Naive thymus-derived CD4-positive, alpha-beta T cell (primary cell): ENCODE measurements at regions of chr2 and their contacts with region 1.

Region 1: GRCh38 chr2:101252408-101253012 is at the start of gene CNOT11:
- DNase-seq: peak; percentile 97 to 99 (median 98)
- ATAC-seq: peak; percentile 89
- H3K4me3 ChIP-seq: peak within 1 kb of the TSS; percentile 91
- H3K4me3 Mint-ChIP-seq: peak within 1 kb of the TSS; percentile 91 to 98 (median 96)
- H3K27ac ChIP-seq: peak within 1 kb of the TSS; percentile 99
- H3K27ac Mint-ChIP-seq: peak within 1 kb of the TSS; percentile 92 to 98 (median 96)
- H3K4me1 ChIP-seq: peaks cover 28 to 39% of the 10 kb centered on the region in 2 donors
- H3K4me1 Mint-ChIP-seq: peaks cover 27 to 58% (median 51%) of the 10 kb centered on the region in 7 donors
- H3K27me3 ChIP-seq: no peaks in the 10 kb centered on the region
- H3K27me3 Mint-ChIP-seq: no peaks in the 10 kb centered on the region
- total RNA-seq, gene CNOT11: 49.0 to 65.7 (median 54.3) TPM

Region 2: DNA sequence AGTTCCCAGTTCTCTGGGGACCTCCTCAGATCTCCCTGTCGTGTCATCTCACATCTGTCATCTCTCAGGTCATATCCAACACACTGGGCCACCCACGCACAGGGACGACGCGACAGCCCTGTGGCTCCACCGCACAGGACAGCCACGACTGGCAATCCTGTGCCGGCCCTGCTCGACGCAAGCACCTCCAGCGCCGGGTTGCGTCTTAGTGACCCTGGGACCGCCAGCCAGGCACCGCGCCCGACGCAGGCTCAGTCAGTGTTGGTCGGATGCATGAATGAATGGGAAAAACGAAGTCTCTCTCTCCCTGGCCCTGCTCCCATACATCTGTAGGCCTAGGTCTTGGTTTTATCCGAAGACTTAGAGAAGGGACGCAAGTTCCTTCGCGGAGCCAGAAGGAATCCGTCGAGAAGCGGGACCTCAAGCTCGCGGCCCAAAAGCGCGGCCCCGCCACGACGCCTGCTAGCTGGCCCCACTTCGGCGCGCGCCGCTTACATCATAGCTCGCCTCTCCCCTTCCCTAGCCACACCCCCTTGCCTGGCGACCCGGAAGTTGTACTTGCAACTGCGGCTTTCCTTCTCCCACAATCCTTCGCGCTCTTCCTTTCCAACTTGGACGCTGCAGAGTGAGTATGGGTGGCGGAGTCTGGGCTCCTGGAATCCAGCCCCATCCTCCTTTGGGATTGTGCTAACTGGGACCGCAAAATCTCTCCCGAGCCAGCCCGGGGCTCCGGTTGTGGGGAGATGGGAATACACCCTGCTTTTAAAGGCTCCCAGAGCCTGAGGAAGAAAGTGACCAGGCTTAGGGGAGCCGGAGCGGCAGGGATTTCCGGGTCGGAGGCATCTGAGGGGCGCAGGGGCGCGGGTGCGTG is 250.6 kb before region 1 on chr2 and contains the start of gene RPL31:
- CTCF ChIA-PET with region 1: no interaction called
- POLR2A ChIA-PET with region 1: interaction called, 8 read pairs
- intact Hi-C with region 1: loop called (anchors 1 kb)
- DNase-seq: peak; percentile 86 to 97 (median 95)
- ATAC-seq: peak; percentile 99
- H3K4me3 ChIP-seq: peak within 1 kb of the TSS; percentile 93
- H3K4me3 Mint-ChIP-seq: peak within 1 kb of the TSS; percentile 91 to 99 (median 95)
- H3K27ac ChIP-seq: peak within 1 kb of the TSS; percentile 86
- H3K27ac Mint-ChIP-seq: peak within 1 kb of the TSS; percentile 88 to 99 (median 98)
- H3K4me1 ChIP-seq: peaks cover 16 to 18% of the 10 kb centered on the region in 2 donors
- H3K4me1 Mint-ChIP-seq: peaks cover 32 to 48% (median 44%) of the 10 kb centered on the region in 7 donors
- H3K27me3 ChIP-seq: no peaks in the 10 kb centered on the region
- H3K27me3 Mint-ChIP-seq: peaks cover 0 to 5% (median 0%) of the 10 kb centered on the region in 5 donors
- total RNA-seq, gene RPL31: 1,182 to 2,835 (median 2,548) TPM

Region 3: GRCh38 chr2:101223814-101224231 is 28.7 kb before region 1 on chr2:
- CTCF ChIA-PET with region 1: interaction called, 3 read pairs
- POLR2A ChIA-PET with region 1: no interaction called
- intact Hi-C with region 1: loop called in 1 of 2 experiments (anchors 2 kb)
- DNase-seq: peak in 8 of 9 donors; percentile 18 to 62 (median 40)
- ATAC-seq: peak; percentile 92
- H3K4me3 ChIP-seq: peak overlapping the region; percentile 26
- H3K4me3 Mint-ChIP-seq: peak overlapping the region; percentile 19 to 79 (median 60)
- H3K27ac ChIP-seq: no peak overlapping the region
- H3K27ac Mint-ChIP-seq: peak overlapping the region; percentile 54 to 89 (median 77)
- H3K4me1 ChIP-seq: peaks cover 12 to 13% of the 10 kb centered on the region in 2 donors
- H3K4me1 Mint-ChIP-seq: peaks cover 12 to 17% (median 16%) of the 10 kb centered on the region in 7 donors
- H3K27me3 ChIP-seq: no peaks in the 10 kb centered on the region
- H3K27me3 Mint-ChIP-seq: no peaks in the 10 kb centered on the region

Region 4: GRCh38 chr2:101308432-101309210 is 56.1 kb after region 1 on chr2 and contains the start of gene RNF149:
- CTCF ChIA-PET with region 1: interaction called, 3 read pairs
- POLR2A ChIA-PET with region 1: interaction called, 14 read pairs
- intact Hi-C with region 1: loop called (anchors 1 kb)
- DNase-seq: peak; percentile 80 to 98 (median 86)
- ATAC-seq: peak; percentile 84
- H3K4me3 ChIP-seq: peak within 1 kb of the TSS; percentile 84
- H3K4me3 Mint-ChIP-seq: peak within 1 kb of the TSS; percentile 91 to 100 (median 98)
- H3K27ac ChIP-seq: peak within 1 kb of the TSS; percentile 88
- H3K27ac Mint-ChIP-seq: peak within 1 kb of the TSS; percentile 91 to 99 (median 98)
- H3K4me1 ChIP-seq: peaks cover 60 to 63% of the 10 kb centered on the region in 2 donors
- H3K4me1 Mint-ChIP-seq: peaks cover 56 to 83% (median 74%) of the 10 kb centered on the region in 7 donors
- H3K27me3 ChIP-seq: no peaks in the 10 kb centered on the region
- H3K27me3 Mint-ChIP-seq: peaks cover 0 to 4% (median 0%) of the 10 kb centered on the region in 5 donors
- total RNA-seq, gene RNF149: 88.9 to 159 (median 114) TPM

Region 5: DNA sequence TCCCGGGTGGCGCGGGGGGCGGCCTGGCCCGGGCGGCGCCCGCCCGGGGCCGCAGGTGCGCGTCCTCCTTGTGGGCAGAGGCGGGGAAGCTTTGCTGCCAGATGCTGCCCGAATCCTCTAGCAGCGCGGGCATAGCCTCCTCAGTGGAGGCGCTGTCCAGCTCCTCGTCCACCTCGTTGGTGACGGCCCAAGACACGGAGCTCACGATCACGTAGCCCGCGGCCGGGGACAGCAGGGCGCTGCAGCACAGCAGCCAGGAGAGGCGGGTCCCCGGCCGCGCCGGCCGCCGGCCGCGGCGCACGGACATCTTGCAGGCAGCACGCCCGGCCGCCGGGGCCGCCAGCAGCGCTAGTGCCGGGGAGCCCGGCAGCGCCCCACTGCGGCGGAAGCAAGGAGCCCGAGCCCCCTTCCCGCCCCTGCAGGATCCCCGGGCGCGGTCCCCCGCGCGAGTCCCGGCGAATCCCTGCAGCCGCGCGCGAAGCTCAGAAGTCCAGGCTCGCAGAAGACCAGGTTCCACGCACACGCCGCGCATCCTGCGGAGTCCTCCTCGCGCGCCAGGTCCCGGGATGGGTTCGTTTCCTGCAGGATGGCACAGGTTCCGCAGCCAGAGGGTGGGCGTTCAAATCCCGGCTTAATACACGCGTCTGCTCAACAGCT is 134.8 kb after region 1 on chr2 and contains the start of gene CREG2:
- CTCF ChIA-PET with region 1: no interaction called
- POLR2A ChIA-PET with region 1: interaction called, 3 read pairs
- intact Hi-C with region 1: loop called in 1 of 2 experiments (anchors 5 kb)
- DNase-seq: peak; percentile 26 to 71 (median 53)
- ATAC-seq: peak; percentile 91
- H3K4me3 ChIP-seq: peak within 1 kb of the TSS; percentile 41
- H3K4me3 Mint-ChIP-seq: peak within 1 kb of the TSS; percentile 67 to 84 (median 78)
- H3K27ac ChIP-seq: no peak within 1 kb of the TSS
- H3K27ac Mint-ChIP-seq: peak within 1 kb of the TSS in 1 of 9 donors; percentile 20
- H3K4me1 ChIP-seq: peaks cover 3% of the 10 kb centered on the region in 2 donors
- H3K4me1 Mint-ChIP-seq: peaks cover 5 to 15% (median 10%) of the 10 kb centered on the region in 7 donors
- H3K27me3 ChIP-seq: peaks cover 0 to 11% of the 10 kb centered on the region in 2 donors
- H3K27me3 Mint-ChIP-seq: peaks cover 34 to 80% (median 52%) of the 10 kb centered on the region in 5 donors
- total RNA-seq, gene CREG2: 0.56 TPM in 1 of 5 experiments, not detected in the others

Region 6: DNA sequence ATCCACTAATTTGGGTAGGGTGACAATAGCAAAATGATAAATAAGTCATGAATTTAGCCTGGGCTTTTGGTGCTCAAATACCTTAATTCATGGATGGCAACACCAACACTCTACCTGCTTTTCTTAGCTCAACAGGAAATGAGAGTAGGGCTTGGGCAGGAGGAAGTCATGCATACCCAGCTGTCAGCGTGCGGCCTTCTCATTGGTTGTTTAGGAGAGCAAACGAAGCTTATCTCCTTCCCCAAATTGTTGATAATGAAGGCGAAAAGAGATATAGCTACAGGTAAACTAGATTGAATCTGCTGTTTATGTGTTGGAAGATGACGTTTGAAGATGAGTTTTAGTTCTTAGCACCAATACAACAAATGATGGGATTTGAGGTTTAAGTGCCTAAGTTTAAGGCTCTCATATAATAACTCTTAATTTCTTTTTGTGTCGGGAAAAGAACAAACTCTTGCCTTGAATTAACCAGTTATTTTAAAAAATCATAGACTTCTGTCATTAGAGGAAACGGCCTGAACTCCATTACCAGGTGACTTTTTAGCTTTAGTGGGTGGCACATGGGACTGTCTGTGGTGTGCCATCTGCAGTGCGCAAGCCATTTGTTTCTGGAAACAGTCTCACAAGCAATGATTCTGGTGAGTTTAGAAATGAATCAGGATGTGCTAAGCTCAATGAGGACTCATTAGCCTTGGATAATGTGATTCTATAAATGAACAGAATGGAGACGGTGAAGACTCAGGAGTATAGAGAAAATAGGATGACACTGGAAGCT is 464.7 kb after region 1 on chr2:
- CTCF ChIA-PET with region 1: no interaction called
- POLR2A ChIA-PET with region 1: no interaction called
- intact Hi-C with region 1: loop called (anchors 5 to 10 kb)
- DNase-seq: peak in 7 of 9 donors; percentile 58 to 74 (median 65)
- ATAC-seq: peak; percentile 72
- H3K4me3 ChIP-seq: peak overlapping the region; percentile 22
- H3K4me3 Mint-ChIP-seq: peak overlapping the region; percentile 39 to 83 (median 76)
- H3K27ac ChIP-seq: peak overlapping the region; percentile 64
- H3K27ac Mint-ChIP-seq: peak overlapping the region in 8 of 9 donors; percentile 76 to 98 (median 96)
- H3K4me1 ChIP-seq: peaks cover 53 to 74% of the 10 kb centered on the region in 2 donors
- H3K4me1 Mint-ChIP-seq: peaks cover 56 to 92% (median 83%) of the 10 kb centered on the region in 7 donors
- H3K27me3 ChIP-seq: no peaks in the 10 kb centered on the region
- H3K27me3 Mint-ChIP-seq: no peaks in the 10 kb centered on the region